Activated CD4-positive, alpha-beta memory T cell treated with anti-CD3 and anti-CD28 coated beads for 36 hours (primary cell): ENCODE measurements at regions of chr5 and their contacts with region 1.

Region 1: DNA sequence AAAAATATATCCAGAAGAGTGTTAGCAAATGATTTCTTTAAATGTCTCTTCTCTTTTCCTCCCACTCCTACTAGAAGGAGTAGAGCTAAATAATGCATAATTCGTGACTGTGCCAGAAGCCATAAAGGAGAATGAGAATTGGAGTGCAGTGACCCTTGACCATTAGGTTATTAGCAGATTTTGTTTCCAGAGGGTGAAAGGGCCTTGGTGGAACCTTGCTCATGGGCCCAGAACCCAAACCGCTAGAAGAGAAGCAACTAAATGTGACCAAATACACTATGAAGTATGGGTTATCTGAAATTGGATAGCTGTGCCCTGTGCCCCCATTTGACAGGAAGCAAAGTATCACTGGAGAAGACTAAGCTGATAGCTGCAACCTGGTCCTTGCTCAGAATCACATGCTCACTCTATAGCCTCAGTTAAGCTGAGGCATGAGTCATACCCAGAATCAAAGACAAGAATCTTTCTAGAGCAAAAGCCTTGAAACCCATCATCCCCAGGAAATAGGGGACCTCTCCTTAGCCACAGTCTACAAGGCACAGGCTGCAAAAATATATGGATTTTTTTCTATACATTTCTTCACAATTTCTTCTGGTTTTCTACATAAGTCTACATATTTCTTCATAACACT is 36.3 kb downstream of the CAPSL start:
- DNase-seq: peak; percentile 44
- H3K4me3 Mint-ChIP-seq: peak overlapping the region; percentile 41
- H3K27ac Mint-ChIP-seq: peak overlapping the region; percentile 79
- H3K4me1 Mint-ChIP-seq: peaks cover 77% of the 10 kb centered on the region
- H3K27me3 Mint-ChIP-seq: no peaks in the 10 kb centered on the region

Region 2: DNA sequence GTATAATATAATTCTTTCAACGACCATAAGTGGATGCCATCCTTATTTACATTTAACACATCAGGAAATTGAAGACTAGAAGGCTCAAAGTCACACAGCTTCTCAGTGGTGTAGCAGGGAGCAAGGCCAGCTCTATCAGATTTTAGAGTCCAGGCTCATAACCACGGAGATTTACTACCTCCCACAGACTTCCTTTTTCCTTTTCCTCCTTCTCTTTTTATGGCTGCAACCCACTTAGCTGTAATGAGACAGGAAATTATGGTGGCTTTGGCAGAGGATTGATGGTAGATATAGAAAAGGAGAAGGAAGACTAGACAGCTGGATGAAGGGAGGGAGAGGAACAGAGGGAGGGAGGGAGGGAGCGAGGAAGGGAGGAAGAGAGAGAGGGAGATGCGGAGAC is 237.1 kb before region 1 on chr5:
- CTCF ChIA-PET with region 1: no interaction called
- POLR2A ChIA-PET with region 1: no interaction called
- intact Hi-C with region 1: loop called (anchors 2 kb)
- DNase-seq: no peak
- H3K4me3 Mint-ChIP-seq: no peak overlapping the region
- H3K27ac Mint-ChIP-seq: no peak overlapping the region
- H3K4me1 Mint-ChIP-seq: peaks cover 37% of the 10 kb centered on the region
- H3K27me3 Mint-ChIP-seq: no peaks in the 10 kb centered on the region

Region 3: DNA sequence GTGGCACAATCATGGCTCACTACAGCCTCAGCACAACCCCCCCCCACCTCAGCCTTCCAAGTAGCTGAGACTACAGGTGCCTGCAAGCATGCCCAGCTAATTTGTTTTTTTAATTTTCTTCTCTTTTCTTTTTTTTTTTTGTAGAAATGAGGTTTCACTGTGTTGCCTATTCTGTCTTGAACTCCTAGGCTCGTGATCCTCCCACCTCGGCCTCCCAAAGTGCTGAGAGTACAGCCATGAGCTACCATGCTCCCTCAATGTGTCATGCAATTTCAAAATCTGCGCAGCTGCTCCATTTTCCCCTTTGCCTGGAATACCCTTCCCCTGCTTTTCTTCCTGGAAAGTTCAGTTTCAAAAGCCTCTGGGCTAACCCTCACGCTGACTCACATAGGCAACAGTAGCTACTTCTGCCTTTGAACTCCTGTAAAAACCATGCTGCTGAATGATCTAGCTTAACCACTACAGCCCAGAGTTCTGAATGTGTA is 116.5 kb before region 1 on chr5:
- CTCF ChIA-PET with region 1: no interaction called
- POLR2A ChIA-PET with region 1: interaction called, 3 read pairs
- intact Hi-C with region 1: loop called (anchors 2 kb)
- DNase-seq: peak; percentile 71
- H3K4me3 Mint-ChIP-seq: peak overlapping the region; percentile 17
- H3K27ac Mint-ChIP-seq: peak overlapping the region; percentile 89
- H3K4me1 Mint-ChIP-seq: peaks cover 85% of the 10 kb centered on the region
- H3K27me3 Mint-ChIP-seq: no peaks in the 10 kb centered on the region

Region 4: GRCh38 chr5:35815089-35815936 is 86.8 kb before region 1 on chr5:
- CTCF ChIA-PET with region 1: interaction called, 4 read pairs
- POLR2A ChIA-PET with region 1: no interaction called
- intact Hi-C with region 1: loop called (anchors 1 kb)
- DNase-seq: peak; percentile 71
- H3K4me3 Mint-ChIP-seq: no peak overlapping the region
- H3K27ac Mint-ChIP-seq: no peak overlapping the region
- H3K4me1 Mint-ChIP-seq: peaks cover 52% of the 10 kb centered on the region
- H3K27me3 Mint-ChIP-seq: no peaks in the 10 kb centered on the region

Region 5: GRCh38 chr5:35857606-35858205 is 44.5 kb before region 1 on chr5:
- CTCF ChIA-PET with region 1: interaction called, 6 read pairs
- POLR2A ChIA-PET with region 1: interaction called, 20 read pairs
- intact Hi-C with region 1: loop called (anchors 1 kb)
- DNase-seq: no peak
- H3K4me3 Mint-ChIP-seq: peak overlapping the region; percentile 93
- H3K27ac Mint-ChIP-seq: peak overlapping the region; percentile 100
- H3K4me1 Mint-ChIP-seq: peaks cover 76% of the 10 kb centered on the region
- H3K27me3 Mint-ChIP-seq: no peaks in the 10 kb centered on the region

Region 6: GRCh38 chr5:35884115-35884788 is 17.9 kb before region 1 on chr5:
- CTCF ChIA-PET with region 1: no interaction called
- POLR2A ChIA-PET with region 1: interaction called, 7 read pairs
- intact Hi-C with region 1: loop called (anchors 1 kb)
- DNase-seq: no peak
- H3K4me3 Mint-ChIP-seq: no peak overlapping the region
- H3K27ac Mint-ChIP-seq: peak overlapping the region; percentile 86
- H3K4me1 Mint-ChIP-seq: peaks cover 40% of the 10 kb centered on the region
- H3K27me3 Mint-ChIP-seq: no peaks in the 10 kb centered on the region

Region 7: DNA sequence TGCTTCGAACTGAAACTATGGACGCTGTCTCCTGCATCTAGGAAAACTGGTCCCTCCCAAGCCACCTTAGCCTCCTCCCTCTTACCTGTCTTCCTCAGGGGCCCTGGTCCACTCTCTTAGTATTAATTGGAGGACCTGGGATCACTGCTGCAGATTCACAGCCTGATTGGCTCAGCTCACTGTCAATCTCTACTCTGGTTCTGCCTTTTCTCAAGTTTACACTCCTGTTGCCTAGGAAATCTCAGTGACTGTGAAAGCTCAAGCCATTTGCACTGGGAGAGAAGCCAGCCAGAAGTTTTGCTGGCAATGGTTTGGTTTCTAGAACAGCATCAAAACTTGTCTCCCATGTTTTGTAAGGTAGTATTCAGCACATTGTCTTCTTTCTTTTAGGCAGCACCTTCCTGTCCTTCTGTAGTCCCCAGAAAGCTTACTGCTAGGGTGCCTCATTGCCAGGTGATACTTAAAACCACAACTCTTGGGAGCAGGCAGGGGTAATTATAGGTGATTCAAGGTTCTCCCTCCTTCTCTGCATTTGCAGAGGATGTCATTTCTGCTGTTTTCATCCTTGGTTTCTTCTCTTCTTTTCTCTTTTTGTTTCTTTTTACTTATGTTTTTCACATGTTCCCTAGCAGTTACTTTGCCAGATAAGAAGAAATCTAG is 36.5 kb after region 1 on chr5 and contains the start of gene CAPSL:
- CTCF ChIA-PET with region 1: no interaction called
- POLR2A ChIA-PET with region 1: no interaction called
- intact Hi-C with region 1: no loop called
- DNase-seq: no peak
- H3K4me3 Mint-ChIP-seq: no peak within 1 kb of the TSS
- H3K27ac Mint-ChIP-seq: no peak within 1 kb of the TSS
- H3K4me1 Mint-ChIP-seq: no peaks in the 10 kb centered on the region
- H3K27me3 Mint-ChIP-seq: peaks cover 15% of the 10 kb centered on the region
- total RNA-seq, gene CAPSL: 0.73 to 1.0 TPM

Region 8: DNA sequence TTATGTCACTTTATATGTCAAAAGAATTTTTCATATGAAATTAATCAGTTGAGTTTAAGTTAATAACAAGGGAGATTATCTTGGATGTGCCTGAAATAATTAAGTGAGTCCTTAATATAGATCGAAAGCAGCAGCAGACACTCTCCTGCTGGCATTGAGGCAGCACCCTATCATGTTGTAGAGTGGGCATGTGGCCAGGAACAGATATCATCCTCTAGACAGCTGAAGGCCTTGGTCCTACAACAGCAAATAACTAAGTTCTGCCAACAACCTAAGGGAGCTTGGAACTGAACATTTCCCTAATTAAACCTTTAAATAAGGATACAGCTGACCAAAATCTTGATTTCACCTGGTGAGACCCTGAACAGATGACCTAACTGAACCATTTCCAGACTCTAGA is 114.8 kb after region 1 on chr5:
- CTCF ChIA-PET with region 1: no interaction called
- POLR2A ChIA-PET with region 1: no interaction called
- intact Hi-C with region 1: no loop called
- DNase-seq: no peak
- H3K4me3 Mint-ChIP-seq: no peak overlapping the region
- H3K27ac Mint-ChIP-seq: no peak overlapping the region
- H3K4me1 Mint-ChIP-seq: no peaks in the 10 kb centered on the region
- H3K27me3 Mint-ChIP-seq: peaks cover 5% of the 10 kb centered on the region

Region 9: DNA sequence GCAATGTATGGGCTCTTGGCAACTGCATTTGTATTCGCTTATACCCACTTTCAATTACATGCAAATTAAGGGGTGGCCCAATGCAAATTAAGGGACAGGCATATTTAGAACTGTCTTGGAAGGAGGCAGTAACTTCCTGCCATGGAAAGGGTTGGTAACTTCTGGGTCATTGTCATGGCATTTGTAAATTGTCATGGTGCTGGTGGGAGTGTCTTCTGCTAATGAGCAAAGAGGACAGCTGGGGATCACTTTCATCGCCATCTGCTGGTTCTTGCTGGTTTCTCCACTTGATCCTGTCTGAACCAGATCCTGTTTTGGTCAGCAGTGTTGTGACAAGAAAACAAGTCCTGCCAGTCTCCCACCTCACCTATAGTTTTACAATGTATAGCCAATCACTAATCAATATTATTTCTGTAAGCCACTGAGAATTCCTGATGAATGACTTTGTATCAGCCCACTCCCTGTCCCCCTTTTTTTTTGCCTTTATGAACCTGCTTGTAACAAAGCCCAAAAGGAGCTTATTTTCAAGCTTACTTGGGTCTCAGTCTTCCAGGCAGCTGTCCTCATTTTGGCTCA is 187.9 kb after region 1 on chr5:
- CTCF ChIA-PET with region 1: no interaction called
- POLR2A ChIA-PET with region 1: no interaction called
- intact Hi-C with region 1: no loop called
- DNase-seq: peak; percentile 26
- H3K4me3 Mint-ChIP-seq: no peak overlapping the region
- H3K27ac Mint-ChIP-seq: no peak overlapping the region
- H3K4me1 Mint-ChIP-seq: no peaks in the 10 kb centered on the region
- H3K27me3 Mint-ChIP-seq: peaks cover 3% of the 10 kb centered on the region